HepG2 (cell line): ENCODE measurements at regions of chr12 and their contacts with region 1.

Region 1: GRCh38 chr12:65556681-65557437 is 267.4 kb upstream of the HMGA2 start:
- DNase-seq: peak; percentile 53
- ATAC-seq: peak; percentile 100
- H3K4me3 ChIP-seq: no peak overlapping the region
- H3K27ac ChIP-seq: no peak overlapping the region
- H3K4me1 ChIP-seq: 0 out of 2 replicates have a peak, but pooled peaks cover 6% of the 10 kb centered on the region
- H3K27me3 ChIP-seq: peaks cover 0 to 4% of the 10 kb centered on the region in 2 experiments; a peak in 2 of 5 replicates
- CTCF ChIP-seq: peak; percentile 96
- EP300 ChIP-seq: no peak
- POLR2A ChIP-seq: no peak
- RAD21 ChIP-seq: peak; percentile 92

Region 2: GRCh38 chr12:65313719-65314317 is 243.0 kb before region 1 on chr12:
- CTCF ChIA-PET with region 1: no interaction called
- POLR2A ChIA-PET with region 1: no interaction called
- in situ Hi-C with region 1: no loop called
- intact Hi-C with region 1: loop called (anchors 2 kb)
- DNase-seq: peak; percentile 28
- ATAC-seq: no peak
- H3K4me3 ChIP-seq: no peak overlapping the region
- H3K27ac ChIP-seq: no peak overlapping the region
- H3K4me1 ChIP-seq: no peaks in the 10 kb centered on the region
- H3K27me3 ChIP-seq: no peaks in the 10 kb centered on the region; a peak in 1 of 5 replicates
- CTCF ChIP-seq: peak; percentile 58
- EP300 ChIP-seq: no peak
- POLR2A ChIP-seq: no peak
- RAD21 ChIP-seq: no peak

Region 3: DNA sequence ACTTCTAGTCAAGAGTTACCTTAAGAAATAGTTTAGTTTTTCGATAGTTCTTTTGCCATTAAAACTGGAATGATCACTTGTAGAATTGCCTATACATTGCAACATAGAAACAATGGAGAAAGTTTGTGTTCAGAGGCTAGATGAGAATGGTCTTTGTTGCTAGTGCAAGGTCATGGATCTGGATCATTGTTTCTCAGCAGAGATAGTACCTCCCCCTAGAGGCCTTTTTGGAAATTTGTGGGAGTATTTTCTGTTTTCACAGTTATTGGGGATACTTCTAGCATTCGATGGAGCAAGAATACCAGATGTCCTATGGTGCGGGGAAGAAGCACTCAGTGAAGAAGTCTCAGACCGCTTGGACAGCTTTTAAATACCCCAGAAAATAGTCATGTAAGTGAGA is 128.7 kb after region 1 on chr12:
- CTCF ChIA-PET with region 1: interaction called, 3 read pairs
- POLR2A ChIA-PET with region 1: no interaction called
- in situ Hi-C with region 1: no loop called
- intact Hi-C with region 1: loop called (anchors 1 kb)
- DNase-seq: peak; percentile 24
- ATAC-seq: peak; percentile 60; the same call in 2 of the 3 replicates
- H3K4me3 ChIP-seq: no peak overlapping the region
- H3K27ac ChIP-seq: no peak overlapping the region
- H3K4me1 ChIP-seq: no peaks in the 10 kb centered on the region
- H3K27me3 ChIP-seq: no peaks in the 10 kb centered on the region; a peak in 1 of 5 replicates
- CTCF ChIP-seq: peak; percentile 40
- EP300 ChIP-seq: no peak
- POLR2A ChIP-seq: no peak
- RAD21 ChIP-seq: no peak

Region 4: DNA sequence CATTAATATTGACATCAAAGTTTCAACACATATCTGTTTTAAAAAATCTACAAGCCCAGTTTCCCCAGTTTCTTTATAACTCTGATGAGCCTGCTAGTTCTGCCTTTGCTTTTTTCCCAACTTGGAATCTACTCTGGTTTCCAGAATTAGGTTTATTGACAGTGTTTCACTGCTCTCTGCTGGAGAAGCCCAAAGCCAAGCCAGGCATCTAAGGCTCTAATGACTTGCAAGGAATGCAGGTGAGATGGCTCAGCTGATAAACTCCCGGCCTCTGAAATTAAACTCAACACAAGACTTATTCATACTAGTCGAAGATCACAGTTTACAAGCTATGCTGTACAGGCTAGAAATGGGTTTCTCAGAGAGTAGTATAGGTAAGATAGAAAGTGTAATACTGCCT is 321.7 kb after region 1 on chr12:
- CTCF ChIA-PET with region 1: no interaction called
- POLR2A ChIA-PET with region 1: no interaction called
- in situ Hi-C with region 1: no loop called
- intact Hi-C with region 1: loop called (anchors 1 kb)
- DNase-seq: no peak
- ATAC-seq: no peak
- H3K4me3 ChIP-seq: no peak overlapping the region
- H3K27ac ChIP-seq: no peak overlapping the region
- H3K4me1 ChIP-seq: peaks cover 76% of the 10 kb centered on the region
- H3K27me3 ChIP-seq: no peaks in the 10 kb centered on the region
- CTCF ChIP-seq: peak; percentile 39
- EP300 ChIP-seq: no peak
- POLR2A ChIP-seq: no peak
- RAD21 ChIP-seq: no peak

Region 5: DNA sequence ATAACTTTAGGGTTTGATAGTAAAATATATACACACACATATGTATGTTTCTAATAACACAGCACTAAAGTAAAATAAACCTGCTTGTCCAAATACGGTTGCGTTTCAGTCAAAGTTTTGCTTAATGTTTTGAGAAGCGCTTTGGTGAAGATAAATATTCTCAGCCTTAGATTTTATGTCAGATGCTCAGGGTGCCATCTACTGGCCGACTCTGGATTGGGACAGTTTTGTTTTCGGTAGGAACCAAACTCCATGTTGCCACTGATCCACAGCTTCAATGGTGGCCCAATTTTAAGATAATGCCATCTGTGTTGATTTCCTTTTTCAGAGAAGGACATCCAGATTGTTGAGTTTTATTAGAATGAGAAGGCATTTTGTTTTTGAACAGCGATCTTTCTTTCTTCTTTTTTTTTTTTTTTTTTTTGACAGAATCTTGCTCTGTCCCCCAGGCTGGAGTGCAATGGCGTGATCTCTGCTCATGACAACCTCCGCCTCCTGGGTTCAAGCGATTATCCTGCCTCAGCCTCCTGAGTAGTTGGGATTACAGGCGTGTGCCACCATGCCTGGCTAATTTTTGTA is 530.6 kb after region 1 on chr12:
- CTCF ChIA-PET with region 1: interaction called, 6 read pairs
- POLR2A ChIA-PET with region 1: no interaction called
- in situ Hi-C with region 1: no loop called
- intact Hi-C with region 1: loop called (anchors 1 kb)
- DNase-seq: peak; percentile 57
- ATAC-seq: peak; percentile 72
- H3K4me3 ChIP-seq: no peak overlapping the region
- H3K27ac ChIP-seq: no peak overlapping the region
- H3K4me1 ChIP-seq: peaks cover 27% of the 10 kb centered on the region
- H3K27me3 ChIP-seq: no peaks in the 10 kb centered on the region
- CTCF ChIP-seq: peak; percentile 83
- EP300 ChIP-seq: no peak
- POLR2A ChIP-seq: no peak
- RAD21 ChIP-seq: peak; percentile 77

Region 6: DNA sequence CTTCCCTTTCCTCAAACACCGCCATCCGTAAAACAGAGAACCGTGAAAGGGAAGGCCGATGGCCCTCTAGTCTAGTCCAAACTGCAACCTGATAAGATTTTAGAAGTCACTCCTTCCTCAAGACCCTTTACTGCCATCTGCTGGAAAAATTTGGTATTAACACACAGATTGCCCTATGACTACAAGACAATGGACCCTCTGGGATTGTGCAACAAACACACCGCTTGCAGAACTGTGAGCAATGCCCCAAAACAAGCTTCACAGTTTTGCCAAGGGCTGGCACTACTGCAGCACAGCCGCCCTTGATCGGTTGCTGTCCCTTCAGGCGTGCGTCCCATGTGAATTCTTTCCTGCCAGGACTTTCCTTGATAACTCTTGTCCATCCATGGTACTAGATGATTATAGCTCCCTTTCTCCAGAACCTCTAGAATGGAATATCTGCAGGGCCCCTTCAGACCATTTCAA is 550.6 kb after region 1 on chr12:
- CTCF ChIA-PET with region 1: interaction called, 13 read pairs
- POLR2A ChIA-PET with region 1: no interaction called
- in situ Hi-C with region 1: no loop called
- intact Hi-C with region 1: loop called (anchors 1 kb)
- DNase-seq: peak; percentile 93
- ATAC-seq: peak; percentile 96
- H3K4me3 ChIP-seq: peak overlapping the region in 1 of 3 experiments; percentile 12; a peak in 2 of 6 replicates
- H3K27ac ChIP-seq: no peak overlapping the region
- H3K4me1 ChIP-seq: peaks cover 12% of the 10 kb centered on the region
- H3K27me3 ChIP-seq: no peaks in the 10 kb centered on the region
- CTCF ChIP-seq: peak; percentile 88
- EP300 ChIP-seq: no peak
- POLR2A ChIP-seq: no peak
- RAD21 ChIP-seq: peak; percentile 72